ENCODE measurements at regions of chr9 and their contacts with region 1.

Region 1: GRCh38 chr9:7799234-7799943 is at the start of gene DMAC1:
- DNase-seq: peak; percentile 58 to 87 (median 64)
- ATAC-seq: peak; percentile 86
- H3K4me3 ChIP-seq: peak within 1 kb of the TSS; percentile 88
- H3K4me3 Mint-ChIP-seq: peak within 1 kb of the TSS; percentile 91
- H3K27ac ChIP-seq: peak within 1 kb of the TSS; percentile 85 to 91
- H3K27ac Mint-ChIP-seq: peak within 1 kb of the TSS; percentile 92
- H3K4me1 ChIP-seq: peaks cover 12% of the 10 kb centered on the region
- H3K4me1 Mint-ChIP-seq: peaks cover 52% of the 10 kb centered on the region
- H3K27me3 ChIP-seq: no peaks in the 10 kb centered on the region
- H3K27me3 Mint-ChIP-seq: no peaks in the 10 kb centered on the region
- CTCF ChIP-seq: no peak
- total RNA-seq, gene DMAC1: 9.5 to 9.9 TPM

Region 2: GRCh38 chr9:7622481-7622880 is 176.9 kb before region 1 on chr9:
- CTCF ChIA-PET with region 1: no interaction called
- POLR2A ChIA-PET with region 1: no interaction called
- intact Hi-C with region 1: loop called in 1 of 2 experiments (anchors 5 kb)
- DNase-seq: no peak
- ATAC-seq: no peak
- H3K4me3 ChIP-seq: no peak overlapping the region
- H3K4me3 Mint-ChIP-seq: no peak overlapping the region
- H3K27ac ChIP-seq: no peak overlapping the region
- H3K27ac Mint-ChIP-seq: no peak overlapping the region
- H3K4me1 ChIP-seq: peaks cover 17% of the 10 kb centered on the region
- H3K4me1 Mint-ChIP-seq: peaks cover 24% of the 10 kb centered on the region
- H3K27me3 ChIP-seq: no peaks in the 10 kb centered on the region
- H3K27me3 Mint-ChIP-seq: no peaks in the 10 kb centered on the region
- CTCF ChIP-seq: no peak

Region 3: GRCh38 chr9:7930613-7931012 is 131.2 kb after region 1 on chr9:
- CTCF ChIA-PET with region 1: no interaction called
- POLR2A ChIA-PET with region 1: no interaction called
- intact Hi-C with region 1: loop called (anchors 5 to 10 kb)
- DNase-seq: no peak
- ATAC-seq: no peak
- H3K4me3 ChIP-seq: no peak overlapping the region
- H3K4me3 Mint-ChIP-seq: no peak overlapping the region
- H3K27ac ChIP-seq: no peak overlapping the region
- H3K27ac Mint-ChIP-seq: no peak overlapping the region
- H3K4me1 ChIP-seq: peaks cover 6% of the 10 kb centered on the region
- H3K4me1 Mint-ChIP-seq: peaks cover 23% of the 10 kb centered on the region
- H3K27me3 ChIP-seq: no peaks in the 10 kb centered on the region
- H3K27me3 Mint-ChIP-seq: no peaks in the 10 kb centered on the region
- CTCF ChIP-seq: no peak

Region 4: DNA sequence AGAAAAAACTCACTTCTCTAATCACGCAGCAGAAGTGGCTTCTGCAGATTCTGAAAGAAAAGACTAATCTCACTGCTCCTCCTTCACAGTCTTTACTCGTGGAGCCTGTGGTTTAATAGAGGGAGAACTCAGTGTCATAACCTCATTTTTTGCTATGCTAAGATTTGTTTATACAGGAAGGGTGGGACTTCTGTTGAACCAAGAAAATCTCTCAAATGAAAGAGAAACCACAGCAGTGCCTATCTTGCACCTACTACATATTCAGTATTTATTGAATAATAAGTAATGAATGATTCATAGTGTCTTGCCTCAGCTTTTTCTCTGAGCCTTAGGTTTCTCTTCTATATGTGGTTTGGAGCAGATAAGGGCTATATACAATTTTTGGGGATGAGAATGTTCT is 136.3 kb after region 1 on chr9:
- CTCF ChIA-PET with region 1: no interaction called
- POLR2A ChIA-PET with region 1: no interaction called
- intact Hi-C with region 1: loop called (anchors 5 to 10 kb)
- DNase-seq: peak in 4 of 14 experiments; percentile 2 to 90 (median 68)
- ATAC-seq: peak; percentile 96
- H3K4me3 ChIP-seq: peak overlapping the region; percentile 17
- H3K4me3 Mint-ChIP-seq: peak overlapping the region; percentile 65
- H3K27ac ChIP-seq: peak overlapping the region; percentile 64 to 77
- H3K27ac Mint-ChIP-seq: peak overlapping the region; percentile 92
- H3K4me1 ChIP-seq: peaks cover 21% of the 10 kb centered on the region
- H3K4me1 Mint-ChIP-seq: peaks cover 24% of the 10 kb centered on the region
- H3K27me3 ChIP-seq: no peaks in the 10 kb centered on the region
- H3K27me3 Mint-ChIP-seq: no peaks in the 10 kb centered on the region
- CTCF ChIP-seq: no peak

Region 5: GRCh38 chr9:7976167-7976755 is 176.9 kb after region 1 on chr9:
- CTCF ChIA-PET with region 1: no interaction called
- POLR2A ChIA-PET with region 1: interaction called, 3 read pairs
- intact Hi-C with region 1: loop called (anchors 1 to 10 kb)
- DNase-seq: peak in 12 of 14 experiments; percentile 4 to 94 (median 42)
- ATAC-seq: peak; percentile 97
- H3K4me3 ChIP-seq: peak overlapping the region; percentile 4
- H3K4me3 Mint-ChIP-seq: peak overlapping the region; percentile 32
- H3K27ac ChIP-seq: peak overlapping the region; percentile 3 to 56
- H3K27ac Mint-ChIP-seq: peak overlapping the region; percentile 82
- H3K4me1 ChIP-seq: peaks cover 42% of the 10 kb centered on the region
- H3K4me1 Mint-ChIP-seq: peaks cover 73% of the 10 kb centered on the region
- H3K27me3 ChIP-seq: no peaks in the 10 kb centered on the region
- H3K27me3 Mint-ChIP-seq: no peaks in the 10 kb centered on the region
- CTCF ChIP-seq: no peak